ENCODE measurements at regions of chr1 and their contacts with region 1.

Region 1: GRCh38 chr1:157090196-157090647 is 9.4 kb downstream of the ETV3L start:
- DNase-seq: peak; percentile 92

Region 2: DNA sequence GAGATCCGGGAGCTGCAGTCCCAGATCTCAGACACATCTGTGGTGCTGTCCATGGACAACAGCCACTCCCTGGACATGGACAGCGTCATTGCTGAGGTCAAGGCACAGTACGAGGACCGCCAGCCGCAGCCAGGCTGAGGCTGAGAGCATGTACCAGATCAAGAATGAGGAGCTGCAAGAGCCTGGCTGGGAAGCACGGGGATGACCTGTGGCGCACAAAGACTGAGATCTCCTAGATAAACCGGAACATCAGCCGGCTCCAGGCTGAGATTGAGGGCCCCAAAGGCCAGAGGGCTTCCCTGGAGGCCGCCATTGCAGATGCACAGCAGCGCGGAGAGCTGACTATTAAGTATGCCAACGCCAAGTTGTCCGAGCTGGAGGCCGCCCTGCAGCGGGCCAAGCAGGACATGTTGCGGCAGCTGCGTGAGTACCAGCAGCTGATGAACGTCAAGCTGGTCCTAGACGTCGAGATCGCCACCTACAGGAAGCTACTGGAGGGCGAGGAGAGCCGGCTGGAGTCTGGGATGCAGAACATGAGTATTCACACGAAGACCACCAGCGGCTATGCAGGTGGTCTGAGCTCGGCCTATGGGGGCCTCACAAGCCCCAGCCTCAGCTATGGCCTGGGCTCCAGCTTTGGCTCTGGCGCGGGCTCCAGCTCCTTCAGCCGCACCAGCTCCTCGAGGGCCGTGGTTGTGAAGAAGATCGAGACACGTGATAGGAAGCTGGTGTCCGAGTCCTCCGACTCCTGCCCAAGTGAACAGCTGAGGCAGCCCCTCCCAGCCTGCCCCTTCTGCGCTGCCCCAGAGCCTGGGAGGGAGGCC is 16.1 kb before region 1 on chr1:
- CTCF ChIA-PET with region 1: interaction called, 12 read pairs
- POLR2A ChIA-PET with region 1: no interaction called
- DNase-seq: peak; percentile 82

Region 3: DNA sequence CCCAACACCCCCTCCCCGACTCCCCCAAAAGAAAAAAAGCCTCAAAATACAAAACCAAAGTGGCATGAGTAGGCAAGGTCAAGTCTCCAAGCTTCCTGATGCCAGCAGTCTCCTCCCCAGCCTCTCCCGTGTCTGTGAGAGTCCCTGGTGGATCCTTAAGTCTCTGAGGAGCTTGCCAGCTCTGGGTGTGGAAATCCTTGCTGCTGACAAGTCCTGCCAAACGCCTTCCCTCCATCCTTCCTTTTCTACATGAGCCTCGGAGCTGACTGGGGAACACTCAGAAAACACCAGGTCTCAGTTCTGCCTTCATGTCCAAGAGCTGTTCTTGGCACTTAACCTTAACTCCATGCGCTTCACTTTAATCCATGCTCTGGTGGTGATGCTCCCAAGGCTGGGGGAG is 13.0 kb after region 1 on chr1:
- CTCF ChIA-PET with region 1: interaction called, 14 read pairs
- POLR2A ChIA-PET with region 1: no interaction called
- DNase-seq: no peak

Region 4: GRCh38 chr1:157110003-157110402 is 19.8 kb after region 1 on chr1:
- CTCF ChIA-PET with region 1: interaction called, 15 read pairs
- POLR2A ChIA-PET with region 1: no interaction called
- DNase-seq: no peak

Region 5: DNA sequence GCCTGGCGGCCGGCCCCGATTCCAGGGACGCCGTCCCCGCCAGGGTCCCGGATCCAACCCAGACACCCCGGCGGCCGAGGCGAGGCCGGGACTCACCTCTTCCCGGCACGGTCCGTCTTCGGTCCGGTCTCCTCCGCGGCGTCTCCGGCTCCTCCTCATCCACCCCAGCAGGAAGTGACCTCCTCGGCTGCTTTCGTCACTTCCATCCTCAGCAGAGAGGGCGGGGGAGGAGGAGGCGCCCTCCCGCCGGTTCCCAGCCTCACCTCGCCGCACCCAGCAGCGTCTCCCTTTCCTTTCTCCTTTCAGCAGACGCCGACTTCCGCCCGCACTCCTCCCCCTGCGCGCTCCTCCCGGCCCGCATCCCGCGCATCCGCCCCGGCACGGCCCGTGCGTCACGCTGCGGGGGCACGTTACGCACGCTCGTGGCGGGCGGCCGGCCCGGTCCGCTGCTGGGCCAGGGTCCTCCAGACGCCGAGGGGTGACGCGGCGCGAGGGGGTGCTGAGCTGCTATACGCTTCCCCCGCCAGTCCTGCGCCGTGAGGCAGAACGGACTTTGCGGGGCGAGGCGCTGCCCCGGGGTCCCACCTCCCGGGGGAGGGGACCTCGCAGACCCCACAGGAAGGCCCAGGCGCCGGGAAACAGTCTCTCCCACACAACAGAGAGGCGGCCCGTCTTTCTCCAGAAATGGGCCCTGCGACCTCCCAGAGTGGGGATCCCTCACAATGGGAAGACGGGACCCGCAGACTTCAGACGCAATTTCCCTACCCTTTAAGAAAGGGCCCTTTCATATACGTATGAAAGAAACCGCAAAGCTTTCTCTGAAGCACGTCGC is 48.2 kb after region 1 on chr1 and contains the start of gene ETV3:
- CTCF ChIA-PET with region 1: interaction called, 12 read pairs
- POLR2A ChIA-PET with region 1: interaction called, 3 read pairs
- DNase-seq: peak; percentile 95

Region 6: DNA sequence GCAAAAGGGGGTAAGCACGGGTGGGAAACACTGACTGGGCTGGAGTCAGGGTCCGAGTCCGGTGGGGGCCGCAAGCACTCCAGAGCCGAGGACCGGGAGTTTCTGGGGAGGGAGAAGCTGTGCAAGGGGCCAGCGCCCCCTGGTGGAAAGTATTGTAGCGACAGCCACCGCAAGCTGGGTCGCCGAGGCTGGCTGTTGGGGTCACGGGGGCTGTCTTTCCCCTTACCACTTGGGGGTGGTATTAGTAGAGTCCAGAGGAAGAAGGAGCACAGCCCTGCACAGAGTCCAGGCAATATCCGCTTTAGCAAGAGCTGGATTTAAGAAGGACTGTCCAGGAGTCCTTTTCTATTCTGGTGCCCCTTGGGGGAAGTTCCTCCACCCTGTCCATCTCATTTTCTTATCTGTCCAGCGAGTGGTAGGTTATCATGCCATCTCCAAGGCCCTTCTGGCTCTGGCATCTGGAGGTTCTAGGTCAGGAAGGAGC is 65.9 kb after region 1 on chr1:
- CTCF ChIA-PET with region 1: interaction called, 127 read pairs
- POLR2A ChIA-PET with region 1: interaction called, 15 read pairs
- DNase-seq: peak; percentile 89